ENCODE measurements at regions of chr15 and their contacts with region 1.

Region 1: DNA sequence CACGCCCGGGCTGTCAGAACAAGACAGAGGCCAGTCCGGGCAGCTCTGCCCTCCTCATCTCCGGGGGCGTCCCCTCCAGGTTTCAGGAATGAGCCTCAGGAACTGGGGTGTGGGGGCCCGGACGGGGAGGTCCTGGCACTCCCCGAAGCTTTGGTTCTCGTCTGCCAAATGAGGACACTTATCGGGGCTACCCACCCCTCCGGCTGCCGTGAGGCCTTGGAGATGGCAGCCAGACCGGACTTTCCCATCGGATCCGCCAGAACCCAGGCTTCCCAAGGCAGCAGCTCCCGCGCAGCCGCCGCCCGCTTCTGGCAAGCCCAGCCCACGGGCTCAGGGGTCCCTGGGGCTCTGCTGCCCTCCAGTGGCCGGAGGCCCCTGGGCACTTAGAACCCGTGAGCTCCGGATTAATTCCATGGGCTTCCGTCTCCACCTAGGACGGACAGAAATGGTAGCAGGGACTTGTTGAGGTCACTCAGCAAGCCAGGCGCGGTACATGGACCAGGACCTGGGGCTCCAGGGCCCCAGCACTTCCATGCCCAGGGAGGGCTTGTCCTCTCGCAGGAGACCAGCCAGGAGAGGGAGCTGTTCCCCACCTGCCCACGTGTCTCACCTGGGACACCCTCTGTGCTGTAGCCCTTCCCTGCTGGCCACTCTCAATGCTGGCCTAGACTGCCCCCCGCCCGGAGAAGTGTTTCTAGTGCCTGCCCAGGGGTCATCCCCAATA is 89.4 kb downstream of the LINGO1 start:
- DNase-seq: peak; percentile 80
- H3K4me3 ChIP-seq: peak overlapping the region in 2 of 3 experiments; percentile 24 to 25
- H3K27ac ChIP-seq: peak overlapping the region; percentile 39
- H3K4me1 ChIP-seq: peaks cover 12% of the 10 kb centered on the region
- H3K27me3 ChIP-seq: no peaks in the 10 kb centered on the region
- CTCF ChIP-seq: peak; percentile 97 to 98
- POLR2A ChIP-seq: no peak

Region 2: GRCh38 chr15:76903251-76903681 is 640.1 kb before region 1 on chr15:
- CTCF ChIA-PET with region 1: no interaction called
- POLR2A ChIA-PET with region 1: no interaction called
- dilution Hi-C with region 1: no loop called
- intact Hi-C with region 1: no loop called
- DNase-seq: peak; percentile 23
- H3K4me3 ChIP-seq: no peak overlapping the region
- H3K27ac ChIP-seq: no peak overlapping the region
- H3K4me1 ChIP-seq: peaks cover 12% of the 10 kb centered on the region
- H3K27me3 ChIP-seq: no peaks in the 10 kb centered on the region
- CTCF ChIP-seq: no peak
- POLR2A ChIP-seq: no peak

Region 3: DNA sequence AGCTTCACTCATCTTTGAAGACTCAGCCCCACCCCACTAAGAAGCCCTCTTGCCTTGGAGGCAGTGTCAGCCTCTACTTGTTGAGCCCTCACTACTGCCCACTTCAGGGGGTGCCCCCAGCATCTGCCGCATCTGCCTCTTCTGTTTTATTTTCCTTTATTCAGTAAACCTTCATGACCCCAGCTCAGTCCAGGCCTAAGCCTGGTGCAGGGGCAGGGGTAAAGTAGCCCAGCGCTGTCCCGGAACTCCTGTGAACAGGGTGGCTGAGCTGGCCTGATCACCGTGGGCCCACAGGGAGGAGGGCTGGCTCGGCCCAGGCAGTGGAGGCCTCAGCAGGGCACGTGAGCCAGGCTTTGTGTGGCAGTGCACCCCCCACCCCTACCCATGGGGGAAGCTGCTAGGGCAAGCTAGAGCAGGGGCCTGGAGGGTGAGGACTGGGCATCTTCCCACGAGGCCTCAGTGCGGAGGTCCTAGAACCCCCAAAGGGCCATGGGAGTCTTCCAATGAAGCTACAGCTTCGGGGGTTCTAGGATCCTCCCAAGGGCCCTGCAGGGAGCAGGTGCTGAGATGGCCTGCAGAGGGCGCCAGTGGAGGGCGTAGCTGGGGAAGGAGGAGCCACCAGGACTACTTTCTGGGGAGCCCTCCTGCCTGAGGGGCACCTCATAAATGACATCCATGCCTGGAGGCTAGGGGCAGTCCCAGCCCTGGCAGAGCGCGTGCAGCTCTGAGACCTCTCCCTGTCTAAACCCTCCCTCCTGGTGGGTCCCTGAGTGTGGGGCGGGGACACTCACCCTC is 508.4 kb before region 1 on chr15:
- CTCF ChIA-PET with region 1: interaction called, 37 read pairs
- POLR2A ChIA-PET with region 1: no interaction called
- dilution Hi-C with region 1: no loop called
- intact Hi-C with region 1: no loop called
- DNase-seq: peak; percentile 29
- H3K4me3 ChIP-seq: no peak overlapping the region
- H3K27ac ChIP-seq: no peak overlapping the region
- H3K4me1 ChIP-seq: no peaks in the 10 kb centered on the region
- H3K27me3 ChIP-seq: no peaks in the 10 kb centered on the region
- CTCF ChIP-seq: peak; percentile 72 to 80
- POLR2A ChIP-seq: no peak

Region 4: GRCh38 chr15:77112838-77113504 is 430.4 kb before region 1 on chr15:
- CTCF ChIA-PET with region 1: interaction called, 187 read pairs
- POLR2A ChIA-PET with region 1: no interaction called
- dilution Hi-C with region 1: no loop called
- intact Hi-C with region 1: no loop called
- DNase-seq: no peak
- H3K4me3 ChIP-seq: no peak overlapping the region
- H3K27ac ChIP-seq: no peak overlapping the region
- H3K4me1 ChIP-seq: no peaks in the 10 kb centered on the region
- H3K27me3 ChIP-seq: no peaks in the 10 kb centered on the region
- CTCF ChIP-seq: no peak
- POLR2A ChIP-seq: no peak

Region 5: DNA sequence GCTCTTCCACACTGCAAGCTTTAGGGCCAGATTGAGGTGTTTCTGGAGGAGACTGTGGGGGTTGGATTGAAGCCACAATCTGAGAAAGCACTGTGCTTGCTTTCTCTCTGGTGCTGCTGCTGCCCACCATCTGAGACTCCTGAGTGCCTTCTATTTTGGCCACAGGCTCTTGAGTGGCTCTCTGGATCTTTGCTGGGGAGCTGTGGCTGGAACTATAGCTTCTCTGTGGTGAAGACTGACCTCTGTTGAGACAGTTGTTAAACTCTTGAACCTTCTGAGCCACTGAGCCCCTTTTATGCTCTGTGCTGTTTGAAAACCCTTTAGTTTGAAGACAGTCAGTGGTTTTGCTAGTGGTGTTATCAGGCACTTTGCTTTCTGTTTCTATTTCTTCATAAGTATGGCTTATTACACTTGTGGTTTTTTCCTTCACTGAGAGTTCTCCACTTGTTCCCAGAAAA is 363.8 kb before region 1 on chr15:
- CTCF ChIA-PET with region 1: interaction called, 256 read pairs
- POLR2A ChIA-PET with region 1: no interaction called
- dilution Hi-C with region 1: no loop called
- intact Hi-C with region 1: no loop called
- DNase-seq: no peak
- H3K4me3 ChIP-seq: no peak overlapping the region
- H3K27ac ChIP-seq: no peak overlapping the region
- H3K4me1 ChIP-seq: peaks cover 12% of the 10 kb centered on the region
- H3K27me3 ChIP-seq: no peaks in the 10 kb centered on the region
- CTCF ChIP-seq: no peak
- POLR2A ChIP-seq: no peak

Region 6: DNA sequence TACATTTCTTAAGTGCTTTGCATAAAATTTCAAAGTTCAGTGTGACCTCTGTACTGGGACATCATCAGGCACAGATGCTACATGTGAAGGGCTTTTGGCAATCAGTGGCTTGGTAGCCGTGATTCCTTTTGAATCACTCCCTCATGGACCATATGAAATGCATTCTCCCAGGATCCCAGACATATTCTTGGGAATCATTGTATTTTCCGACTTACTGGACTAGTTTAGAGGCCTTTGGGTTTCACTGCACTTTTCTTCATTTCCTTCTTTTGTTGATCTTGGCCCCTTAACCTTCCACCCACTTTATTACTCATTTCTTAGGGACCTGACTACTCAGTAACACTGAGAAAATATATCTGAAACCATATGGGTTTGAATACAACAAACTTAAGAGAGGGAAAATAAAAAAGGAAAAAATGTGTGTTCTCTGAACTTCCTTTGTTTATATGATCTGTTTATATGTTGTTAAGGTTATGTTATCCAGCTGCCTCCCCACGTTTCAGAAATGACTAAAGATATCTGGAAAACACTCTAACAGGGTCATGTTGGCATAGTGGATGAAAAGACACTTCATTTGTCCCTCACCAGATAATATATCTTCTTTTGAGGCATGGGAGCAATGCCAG is 87.5 kb before region 1 on chr15:
- CTCF ChIA-PET with region 1: interaction called, 16 read pairs
- POLR2A ChIA-PET with region 1: no interaction called
- dilution Hi-C with region 1: no loop called
- intact Hi-C with region 1: no loop called
- DNase-seq: peak; percentile 95
- H3K4me3 ChIP-seq: peak overlapping the region in 1 of 3 experiments; percentile 23
- H3K27ac ChIP-seq: peak overlapping the region; percentile 96
- H3K4me1 ChIP-seq: peaks cover 54% of the 10 kb centered on the region
- H3K27me3 ChIP-seq: no peaks in the 10 kb centered on the region
- CTCF ChIP-seq: no peak
- POLR2A ChIP-seq: no peak

Region 7: GRCh38 chr15:77531146-77531962 is 12.0 kb before region 1 on chr15:
- CTCF ChIA-PET with region 1: interaction called, 12 read pairs
- POLR2A ChIA-PET with region 1: no interaction called
- dilution Hi-C with region 1: no loop called
- intact Hi-C with region 1: no loop called
- DNase-seq: no peak
- H3K4me3 ChIP-seq: no peak overlapping the region
- H3K27ac ChIP-seq: no peak overlapping the region
- H3K4me1 ChIP-seq: no peaks in the 10 kb centered on the region
- H3K27me3 ChIP-seq: peaks cover 2 to 4% of the 10 kb centered on the region in 2 experiments
- CTCF ChIP-seq: no peak
- POLR2A ChIP-seq: no peak

Measured in endothelial cell of umbilical vein (primary cell).